Ovary (tissue), 10 donors: ENCODE measurements at regions of chr11 and their contacts with region 1.

Region 1: DNA sequence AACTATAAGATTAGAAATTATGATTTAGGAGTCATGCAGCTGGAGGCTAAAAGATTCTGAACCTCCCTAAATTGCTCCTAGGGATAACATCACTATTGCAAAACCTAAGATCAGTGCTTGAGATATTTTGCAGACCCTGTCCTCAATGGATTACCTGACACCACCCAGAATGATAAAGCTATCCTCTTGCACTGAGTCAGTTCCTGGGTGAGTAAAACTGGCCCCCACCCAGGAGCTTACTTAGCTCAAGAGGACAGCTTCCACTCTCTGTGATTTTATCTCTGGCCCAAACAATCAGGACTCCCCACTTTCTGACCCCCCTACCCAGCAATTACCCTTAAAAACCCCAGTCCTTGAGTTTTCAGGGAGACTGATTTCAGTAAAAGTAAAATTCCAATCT is 2074.4 kb upstream of the RAG2 start:
- DNase-seq: no peak
- H3K4me3 ChIP-seq: no peak overlapping the region
- H3K27ac ChIP-seq: no peak overlapping the region
- H3K4me1 ChIP-seq: no peaks in the 10 kb centered on the region
- H3K27me3 ChIP-seq: no peaks in the 10 kb centered on the region
- CTCF ChIP-seq: no peak
- EP300 ChIP-seq: no peak
- POLR2A ChIP-seq: no peak

Region 2: GRCh38 chr11:37040921-37041320 is 1631.5 kb before region 1 on chr11:
- intact Hi-C with region 1: loop called in 1 of 4 experiments (anchors 5 kb)
- DNase-seq: no peak
- H3K4me3 ChIP-seq: no peak overlapping the region
- H3K27ac ChIP-seq: no peak overlapping the region
- H3K4me1 ChIP-seq: no peaks in the 10 kb centered on the region
- H3K27me3 ChIP-seq: no peaks in the 10 kb centered on the region
- CTCF ChIP-seq: no peak
- EP300 ChIP-seq: no peak
- POLR2A ChIP-seq: no peak

Region 3: GRCh38 chr11:38530221-38530620 is 142.2 kb before region 1 on chr11:
- intact Hi-C with region 1: no loop called
- DNase-seq: no peak
- H3K4me3 ChIP-seq: no peak overlapping the region
- H3K27ac ChIP-seq: no peak overlapping the region
- H3K4me1 ChIP-seq: no peaks in the 10 kb centered on the region
- H3K27me3 ChIP-seq: no peaks in the 10 kb centered on the region
- CTCF ChIP-seq: no peak
- EP300 ChIP-seq: no peak
- POLR2A ChIP-seq: no peak